ENCODE measurements at regions of chr21 and their contacts with region 1.

Region 1: DNA sequence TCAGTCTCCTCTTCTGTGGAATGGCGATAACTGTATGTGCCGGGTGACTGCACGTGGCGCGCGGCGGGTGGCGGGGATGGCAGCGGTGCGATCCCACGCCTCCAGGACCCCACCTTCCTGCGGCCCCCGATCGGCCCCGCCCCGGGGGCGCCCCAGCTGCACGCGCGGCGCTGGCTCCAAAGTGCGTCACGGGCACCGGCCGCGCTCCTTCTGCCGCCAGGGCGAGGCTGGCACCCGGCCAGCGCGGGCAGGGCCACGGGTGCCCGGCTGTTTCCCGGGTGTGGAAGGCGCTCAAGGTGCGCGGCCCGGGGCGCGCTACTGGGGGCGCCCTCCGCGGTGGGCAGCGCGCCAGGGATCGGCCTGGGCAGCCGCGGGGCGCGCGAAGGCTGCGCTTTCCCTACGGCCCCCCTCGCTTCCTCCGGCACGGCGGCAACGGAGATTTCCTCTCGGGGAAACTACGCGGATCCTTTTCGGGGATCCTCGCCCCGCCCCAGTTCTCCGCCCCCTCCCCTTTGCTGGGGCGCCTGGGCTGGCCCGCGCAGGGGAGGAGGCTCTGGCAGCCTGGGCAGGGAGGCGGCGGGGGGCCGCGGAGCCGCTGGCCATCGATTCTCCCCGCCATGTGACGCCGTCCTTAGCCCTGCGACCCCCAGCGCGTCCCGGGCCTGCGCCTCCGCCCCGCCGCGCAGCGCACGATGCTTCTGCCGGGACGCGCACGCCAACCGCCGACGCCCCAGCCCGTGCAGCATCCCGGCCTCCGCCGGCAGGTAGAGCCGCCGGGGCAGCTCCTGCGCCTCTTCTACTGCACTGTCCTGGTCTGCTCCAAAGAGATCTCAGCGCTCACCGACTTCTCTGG is at the start of gene EVA1C:
- DNase-seq: peak; percentile 80
- ATAC-seq: peak; percentile 68
- H3K4me3 Mint-ChIP-seq: peak within 1 kb of the TSS; percentile 94
- H3K27ac Mint-ChIP-seq: peak within 1 kb of the TSS; percentile 97
- H3K4me1 Mint-ChIP-seq: peaks cover 28% of the 10 kb centered on the region
- H3K27me3 Mint-ChIP-seq: no peaks in the 10 kb centered on the region
- total RNA-seq, gene EVA1C: 9.3 to 10.4 TPM

Region 2: GRCh38 chr21:32278518-32279376 is 133.6 kb before region 1 on chr21 and contains the start of gene MIS18A:
- CTCF ChIA-PET with region 1: no interaction called
- POLR2A ChIA-PET with region 1: no interaction called
- intact Hi-C with region 1: loop called in 1 of 2 experiments (anchors 1 kb)
- DNase-seq: peak; percentile 98
- ATAC-seq: peak; percentile 90
- H3K4me3 Mint-ChIP-seq: peak within 1 kb of the TSS; percentile 86
- H3K27ac Mint-ChIP-seq: peak within 1 kb of the TSS; percentile 84
- H3K4me1 Mint-ChIP-seq: peaks cover 17% of the 10 kb centered on the region
- H3K27me3 Mint-ChIP-seq: no peaks in the 10 kb centered on the region
- total RNA-seq, gene MIS18A: 21.5 to 35.3 TPM

Region 3: DNA sequence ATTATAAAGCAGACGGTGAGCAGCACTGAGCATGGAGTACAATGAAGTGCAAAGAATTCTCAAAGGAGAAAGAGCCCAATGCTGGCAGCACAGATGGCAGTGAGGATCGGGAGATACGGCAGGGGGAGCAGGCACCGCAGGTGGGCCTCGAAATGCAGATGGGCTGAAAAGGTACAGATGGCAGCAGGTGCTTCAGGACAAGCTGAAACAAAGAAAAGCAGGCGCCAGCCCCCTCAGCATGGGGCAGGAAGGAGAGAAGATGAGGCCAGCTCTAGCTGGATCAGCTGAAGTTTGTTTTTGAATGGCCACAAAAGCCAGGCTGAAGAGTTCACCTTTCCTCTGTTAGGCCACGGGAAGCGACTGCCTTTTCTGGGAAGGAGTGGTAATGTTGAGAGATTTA is 192.1 kb after region 1 on chr21:
- CTCF ChIA-PET with region 1: interaction called, 106 read pairs
- POLR2A ChIA-PET with region 1: interaction called, 6 read pairs
- intact Hi-C with region 1: no loop called
- DNase-seq: no peak
- ATAC-seq: no peak
- H3K4me3 Mint-ChIP-seq: no peak overlapping the region
- H3K27ac Mint-ChIP-seq: no peak overlapping the region
- H3K4me1 Mint-ChIP-seq: no peaks in the 10 kb centered on the region
- H3K27me3 Mint-ChIP-seq: no peaks in the 10 kb centered on the region

Region 4: DNA sequence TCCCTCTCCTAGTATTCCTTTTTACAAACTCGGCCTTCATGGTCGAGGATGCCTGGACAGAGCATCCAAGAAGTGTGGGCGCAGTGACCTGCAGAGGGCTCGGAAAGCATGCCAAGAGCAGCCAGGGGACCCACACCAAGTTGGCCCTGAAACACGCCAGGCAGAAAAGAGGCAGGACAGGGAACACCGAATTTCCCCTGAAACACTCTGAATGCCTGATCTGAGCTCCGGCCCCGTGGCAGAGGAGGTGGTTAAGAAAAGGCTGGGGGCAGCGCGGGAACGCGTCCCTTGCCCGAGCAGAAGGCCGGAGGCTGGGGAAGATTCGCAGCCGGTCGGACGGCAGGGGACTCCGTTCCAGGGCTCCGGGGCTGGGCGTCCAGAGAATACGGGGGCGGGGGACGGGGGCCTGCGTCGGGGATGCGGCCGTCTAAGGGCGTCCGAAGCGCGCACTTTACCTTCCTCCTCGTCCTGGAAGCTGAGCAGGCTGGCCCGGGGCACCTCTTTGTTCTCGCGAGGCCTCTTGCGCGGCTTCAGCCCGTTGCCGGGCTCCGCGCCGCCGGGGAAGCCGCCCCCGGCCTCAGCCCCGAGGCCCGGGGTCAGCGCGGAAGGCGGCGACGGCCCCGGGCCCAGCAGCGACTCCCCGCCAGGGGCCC is 358.6 kb after region 1 on chr21:
- CTCF ChIA-PET with region 1: no interaction called
- POLR2A ChIA-PET with region 1: no interaction called
- intact Hi-C with region 1: loop called in 1 of 2 experiments (anchors 1 kb)
- DNase-seq: peak; percentile 76
- ATAC-seq: peak; percentile 17
- H3K4me3 Mint-ChIP-seq: peak overlapping the region; percentile 99
- H3K27ac Mint-ChIP-seq: peak overlapping the region; percentile 96
- H3K4me1 Mint-ChIP-seq: peaks cover 54% of the 10 kb centered on the region
- H3K27me3 Mint-ChIP-seq: no peaks in the 10 kb centered on the region

Measured in activated CD4-positive, alpha-beta T cell treated with anti-CD3 and anti-CD28 coated beads for 36 hours (primary cell).